GM12878 (cell line): ENCODE measurements at regions of chr6 and their contacts with region 1.

Region 1: DNA sequence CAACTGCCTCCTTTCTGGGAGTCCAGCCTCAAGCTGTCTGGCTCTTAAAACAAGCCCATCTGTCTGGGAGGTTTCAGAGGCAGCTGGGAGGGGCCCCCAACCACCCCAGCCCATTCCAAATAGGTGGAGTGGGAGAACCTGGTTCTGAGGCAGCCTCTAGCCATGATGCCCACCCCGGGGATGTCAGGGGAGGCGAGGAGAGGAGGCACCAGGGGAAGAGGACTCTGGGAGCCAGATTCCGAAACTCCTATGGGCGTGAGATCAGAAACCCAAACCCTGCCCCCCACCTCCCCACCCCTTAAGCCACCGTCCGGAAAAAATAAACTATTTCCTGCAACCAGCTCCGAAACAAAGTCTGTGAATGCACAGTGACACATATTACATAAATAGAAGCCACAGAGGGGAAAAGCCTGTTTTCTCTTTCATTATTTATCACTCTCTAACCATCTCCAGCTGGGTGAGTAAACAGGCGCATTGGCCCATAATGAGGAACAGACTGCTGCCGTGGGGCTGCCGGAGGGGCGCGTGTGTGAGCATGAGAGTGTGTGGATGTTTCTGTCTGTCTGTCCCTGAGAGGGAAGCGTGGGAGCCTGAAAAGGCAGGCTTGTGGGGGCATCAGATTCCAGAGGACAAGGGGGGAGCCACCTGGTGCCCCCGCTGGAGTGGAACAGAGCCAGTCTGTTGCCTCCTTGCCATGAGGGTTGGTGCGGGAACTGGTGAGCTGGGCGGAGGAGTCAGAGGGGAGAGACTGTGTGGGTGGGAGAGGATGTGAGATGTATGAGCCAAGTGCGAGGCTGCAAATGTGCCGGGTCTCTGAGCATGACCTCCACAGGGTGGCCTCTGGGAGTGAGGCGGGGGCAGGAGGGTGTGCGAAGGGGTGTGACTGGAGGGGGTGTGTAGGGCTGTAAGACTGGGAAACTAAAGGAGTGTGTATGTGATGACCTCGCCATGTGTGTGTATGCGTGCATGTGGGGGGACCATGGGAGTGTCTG is 14.3 kb upstream of the FOXP4 start:
- DNase-seq: peak; percentile 92
- ATAC-seq: peak; percentile 90
- H3K4me3 ChIP-seq: peak overlapping the region; percentile 33; the same call in 1 of the 2 replicates
- H3K27ac ChIP-seq: peak overlapping the region; percentile 93
- H3K4me1 ChIP-seq: peaks cover 34% of the 10 kb centered on the region
- H3K27me3 ChIP-seq: 0 out of 4 replicates have a peak, but pooled peaks cover 0 to 2% of the 10 kb centered on the region in 2 experiments
- CTCF ChIP-seq: peak in 1 of 3 experiments; percentile 15; a peak in 1 of 6 replicates
- EP300 ChIP-seq: peak; percentile 95 to 96
- POLR2A ChIP-seq: peak; percentile 83
- RAD21 ChIP-seq: peak; percentile 28

Region 2: DNA sequence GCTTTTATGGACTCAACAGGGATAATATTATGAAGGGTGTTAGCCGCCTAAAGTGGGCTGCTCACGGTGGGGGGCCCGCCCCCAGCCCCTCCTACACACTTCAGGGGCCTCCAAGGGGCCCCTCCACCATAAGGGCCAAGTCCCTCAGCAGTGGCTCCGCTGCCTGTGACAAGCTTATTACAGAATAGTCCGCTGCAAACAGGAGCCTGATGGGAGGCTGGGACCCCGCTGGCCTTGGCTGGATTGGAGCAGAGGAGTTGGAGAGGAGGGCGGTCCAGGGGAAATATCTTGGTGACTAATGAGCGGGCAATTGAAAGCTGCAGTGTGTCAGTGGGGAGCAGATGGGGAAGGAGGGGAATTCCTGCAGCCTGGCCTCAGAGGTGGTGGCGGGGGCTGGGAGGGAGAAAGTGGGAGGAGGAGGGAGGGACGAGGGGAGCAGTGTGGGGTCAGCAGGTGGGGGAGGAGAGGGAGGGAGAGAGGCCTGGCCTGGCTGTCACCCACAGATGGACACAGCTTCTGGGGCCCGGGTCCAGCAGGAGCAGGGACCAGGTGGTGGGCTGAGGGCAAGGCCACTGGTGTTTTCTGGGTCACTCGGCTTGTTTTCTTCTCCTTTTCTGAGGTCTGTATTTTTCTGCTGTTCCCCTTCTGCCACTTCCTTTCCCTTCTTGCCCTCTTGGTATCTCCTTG is 43.3 kb before region 1 on chr6:
- CTCF ChIA-PET with region 1: no interaction called
- POLR2A ChIA-PET with region 1: interaction called, 3 read pairs
- RAD21 ChIA-PET with region 1: interaction called, 4 read pairs
- SMC1A ChIA-PET with region 1: interaction called, 9 read pairs
- in situ Hi-C with region 1: no loop called
- intact Hi-C with region 1: loop called (anchors 5 kb)
- DNase-seq: peak; percentile 42
- ATAC-seq: peak; percentile 87
- H3K4me3 ChIP-seq: peak overlapping the region; percentile 42; the same call in 1 of the 2 replicates
- H3K27ac ChIP-seq: peak overlapping the region; percentile 68
- H3K4me1 ChIP-seq: peaks cover 47% of the 10 kb centered on the region
- H3K27me3 ChIP-seq: no peaks in the 10 kb centered on the region
- CTCF ChIP-seq: no peak
- EP300 ChIP-seq: no peak
- POLR2A ChIP-seq: no peak
- RAD21 ChIP-seq: 0 out of 2 replicates have a peak, but pooled peaks have one; percentile 1

Region 3: DNA sequence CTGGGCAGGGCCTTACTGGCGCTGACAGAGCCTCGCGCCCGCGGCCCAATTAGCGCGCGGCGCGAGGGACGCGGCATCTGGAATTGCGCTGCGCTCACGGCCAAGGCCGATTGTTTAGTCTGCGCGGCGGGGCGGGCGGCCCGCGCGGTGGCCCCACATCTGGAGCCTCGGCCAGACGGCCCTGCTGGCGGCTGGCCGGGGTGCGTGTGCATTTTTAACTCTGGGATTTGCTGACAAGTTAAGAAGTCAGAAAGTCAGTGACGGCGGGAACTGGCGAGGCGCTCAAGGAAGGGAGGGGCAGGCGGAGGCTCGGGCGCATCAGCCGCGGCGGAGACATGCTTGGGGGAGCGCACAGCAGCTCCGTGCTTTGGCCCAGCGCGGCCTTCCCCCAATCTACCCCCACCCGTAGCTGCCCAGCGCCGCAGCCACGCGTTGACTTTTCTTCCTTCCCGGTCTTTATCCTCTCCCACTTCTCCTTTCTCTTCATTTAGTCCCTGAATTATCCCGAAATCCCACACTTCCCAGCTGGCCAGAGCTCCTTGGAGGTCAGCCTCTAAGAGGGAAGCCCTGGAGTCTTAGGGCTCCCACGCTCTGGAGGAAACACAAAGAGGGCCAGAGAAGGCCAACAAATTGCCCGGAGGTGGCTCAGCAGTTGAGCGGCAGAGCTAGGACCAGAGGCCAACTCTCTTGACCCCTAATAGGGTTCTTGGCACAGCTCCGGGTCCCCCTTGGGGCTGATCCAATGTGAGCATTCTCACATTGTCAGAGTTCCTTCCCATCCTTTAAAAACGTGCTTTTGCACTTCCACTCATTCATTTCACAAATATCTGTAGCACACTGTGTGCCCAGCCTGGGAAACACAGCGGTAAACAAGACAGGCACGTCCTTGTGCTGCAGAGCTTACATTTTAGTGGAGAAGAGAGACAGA is 26.5 kb before region 1 on chr6:
- CTCF ChIA-PET with region 1: interaction called, 7 read pairs
- POLR2A ChIA-PET with region 1: interaction called, 5 read pairs
- RAD21 ChIA-PET with region 1: interaction called, 7 read pairs
- SMC1A ChIA-PET with region 1: interaction called, 11 read pairs
- in situ Hi-C with region 1: no loop called
- intact Hi-C with region 1: loop called (anchors 1 kb)
- DNase-seq: no peak
- ATAC-seq: peak; percentile 90
- H3K4me3 ChIP-seq: peak overlapping the region; percentile 41; the same call in 1 of the 2 replicates
- H3K27ac ChIP-seq: no peak overlapping the region
- H3K4me1 ChIP-seq: peaks cover 24% of the 10 kb centered on the region
- H3K27me3 ChIP-seq: peaks cover 3 to 5% of the 10 kb centered on the region in 2 experiments
- CTCF ChIP-seq: no peak
- EP300 ChIP-seq: no peak
- POLR2A ChIP-seq: no peak
- RAD21 ChIP-seq: no peak

Region 4: GRCh38 chr6:41518118-41518517 is 13.8 kb before region 1 on chr6:
- CTCF ChIA-PET with region 1: interaction called, 3 read pairs
- POLR2A ChIA-PET with region 1: interaction called, 5 read pairs
- RAD21 ChIA-PET with region 1: no interaction called
- SMC1A ChIA-PET with region 1: interaction called, 13 read pairs
- in situ Hi-C with region 1: no loop called
- intact Hi-C with region 1: no loop called
- DNase-seq: no peak
- ATAC-seq: no peak
- H3K4me3 ChIP-seq: no peak overlapping the region
- H3K27ac ChIP-seq: no peak overlapping the region
- H3K4me1 ChIP-seq: no peaks in the 10 kb centered on the region
- H3K27me3 ChIP-seq: no peaks in the 10 kb centered on the region; a peak in 1 of 4 replicates
- CTCF ChIP-seq: no peak
- EP300 ChIP-seq: no peak
- POLR2A ChIP-seq: no peak
- RAD21 ChIP-seq: no peak

Region 5: GRCh38 chr6:41545703-41546474 is 14.0 kb after region 1 on chr6 and contains the start of gene FOXP4:
- CTCF ChIA-PET with region 1: interaction called, 6 read pairs
- POLR2A ChIA-PET with region 1: interaction called, 13 read pairs
- RAD21 ChIA-PET with region 1: interaction called, 8 read pairs
- SMC1A ChIA-PET with region 1: interaction called, 16 read pairs
- in situ Hi-C with region 1: no loop called
- intact Hi-C with region 1: loop called (anchors 1 kb)
- DNase-seq: peak; percentile 73
- ATAC-seq: peak; percentile 85
- H3K4me3 ChIP-seq: peak within 1 kb of the TSS; percentile 91
- H3K27ac ChIP-seq: peak within 1 kb of the TSS; percentile 74
- H3K4me1 ChIP-seq: peaks cover 16% of the 10 kb centered on the region
- H3K27me3 ChIP-seq: no peaks in the 10 kb centered on the region
- CTCF ChIP-seq: no peak
- EP300 ChIP-seq: no peak
- POLR2A ChIP-seq: peak; percentile 65
- RAD21 ChIP-seq: 0 out of 2 replicates have a peak, but pooled peaks have one; percentile 0
- polyA plus RNA-seq, gene FOXP4: 0.31 to 0.40 TPM

Region 6: DNA sequence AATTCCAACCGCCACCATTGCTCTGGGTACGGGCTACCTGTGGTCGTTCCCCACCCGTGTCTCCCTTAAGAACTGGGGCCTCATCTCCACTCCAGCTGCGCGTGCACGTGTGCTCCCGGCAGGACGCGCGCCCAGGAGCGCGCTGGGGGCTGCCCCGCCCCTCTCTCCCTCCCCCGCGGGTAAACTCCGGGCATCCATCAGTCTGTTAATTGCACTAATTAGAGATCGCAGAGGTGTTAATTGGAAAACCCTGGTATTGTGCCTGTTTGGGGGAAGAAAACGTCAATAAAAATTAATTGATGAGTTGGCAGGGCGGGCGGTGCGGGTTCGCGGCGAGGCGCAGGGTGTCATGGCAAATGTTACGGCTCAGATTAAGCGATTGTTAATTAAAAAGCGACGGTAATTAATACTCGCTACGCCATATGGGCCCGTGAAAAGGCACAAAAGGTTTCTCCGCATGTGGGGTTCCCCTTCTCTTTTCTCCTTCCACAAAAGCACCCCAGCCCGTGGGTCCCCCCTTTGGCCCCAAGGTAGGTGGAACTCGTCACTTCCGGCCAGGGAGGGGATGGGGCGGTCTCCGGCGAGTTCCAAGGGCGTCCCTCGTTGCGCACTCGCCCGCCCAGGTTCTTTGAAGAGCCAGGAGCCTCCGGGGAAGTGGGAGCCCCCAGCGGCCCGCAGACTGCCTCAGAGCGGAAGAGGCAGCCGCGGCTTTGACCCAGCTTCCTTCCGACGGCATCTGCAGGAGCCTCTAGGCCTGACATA is 28.7 kb after region 1 on chr6:
- CTCF ChIA-PET with region 1: no interaction called
- POLR2A ChIA-PET with region 1: no interaction called
- RAD21 ChIA-PET with region 1: no interaction called
- SMC1A ChIA-PET with region 1: interaction called, 3 read pairs
- in situ Hi-C with region 1: no loop called
- intact Hi-C with region 1: loop called (anchors 1 kb)
- DNase-seq: no peak
- ATAC-seq: peak; percentile 92
- H3K4me3 ChIP-seq: peak overlapping the region; percentile 53
- H3K27ac ChIP-seq: peak overlapping the region; percentile 42; the same call in 1 of the 2 replicates
- H3K4me1 ChIP-seq: peaks cover 5% of the 10 kb centered on the region; the same call in 1 of the 2 replicates
- H3K27me3 ChIP-seq: no peaks in the 10 kb centered on the region
- CTCF ChIP-seq: 0 out of 6 replicates have a peak, but pooled peaks of 1 of the 3 experiments have one; percentile 3
- EP300 ChIP-seq: no peak
- POLR2A ChIP-seq: peak; percentile 60
- RAD21 ChIP-seq: 0 out of 2 replicates have a peak, but pooled peaks have one; percentile 4

Region 7: DNA sequence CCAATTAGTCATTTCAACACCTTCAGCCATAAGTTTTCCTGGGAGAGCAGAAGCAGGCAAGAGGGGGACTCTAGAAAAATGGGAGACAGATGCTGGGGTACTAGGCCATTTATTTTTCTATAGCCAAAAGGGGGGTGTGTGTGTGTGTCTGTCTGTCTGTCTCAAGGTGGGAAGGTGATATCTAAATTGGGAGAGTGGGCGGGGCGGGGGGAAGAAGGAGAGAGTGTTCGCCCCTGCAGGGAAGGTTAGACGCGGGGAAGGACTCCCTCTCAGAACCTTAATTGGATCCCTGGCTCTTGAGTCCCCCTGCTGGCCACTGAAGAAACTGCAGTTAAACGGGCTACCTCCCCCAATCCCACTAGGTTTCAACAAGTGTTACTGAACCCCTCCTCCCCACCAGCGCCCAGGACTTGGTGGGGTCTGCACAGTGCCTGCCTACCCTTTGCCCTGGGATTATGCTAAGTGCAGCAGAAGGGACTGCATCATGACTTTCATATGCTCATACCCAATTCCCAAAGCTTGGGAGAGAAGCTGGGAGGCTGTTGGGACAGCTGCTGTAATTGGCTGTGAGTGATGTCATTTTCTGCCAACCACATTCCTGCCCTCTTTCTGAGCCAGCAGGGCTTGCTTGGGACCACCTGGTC is 60.1 kb after region 1 on chr6:
- CTCF ChIA-PET with region 1: interaction called, 3 read pairs
- POLR2A ChIA-PET with region 1: no interaction called
- RAD21 ChIA-PET with region 1: interaction called, 3 read pairs
- SMC1A ChIA-PET with region 1: no interaction called
- in situ Hi-C with region 1: no loop called
- intact Hi-C with region 1: loop called (anchors 5 kb)
- DNase-seq: peak; percentile 9
- ATAC-seq: peak; percentile 92
- H3K4me3 ChIP-seq: no peak overlapping the region
- H3K27ac ChIP-seq: no peak overlapping the region
- H3K4me1 ChIP-seq: no peaks in the 10 kb centered on the region
- H3K27me3 ChIP-seq: no peaks in the 10 kb centered on the region
- CTCF ChIP-seq: peak; percentile 86 to 96 (median 94); a peak in 5 of 6 replicates
- EP300 ChIP-seq: no peak
- POLR2A ChIP-seq: 0 out of 2 replicates have a peak, but pooled peaks have one; percentile 11
- RAD21 ChIP-seq: peak; percentile 96